CD8-positive, alpha-beta memory T cell (primary cell): ENCODE measurements at regions of chr3 and their contacts with region 1.

Region 1: DNA sequence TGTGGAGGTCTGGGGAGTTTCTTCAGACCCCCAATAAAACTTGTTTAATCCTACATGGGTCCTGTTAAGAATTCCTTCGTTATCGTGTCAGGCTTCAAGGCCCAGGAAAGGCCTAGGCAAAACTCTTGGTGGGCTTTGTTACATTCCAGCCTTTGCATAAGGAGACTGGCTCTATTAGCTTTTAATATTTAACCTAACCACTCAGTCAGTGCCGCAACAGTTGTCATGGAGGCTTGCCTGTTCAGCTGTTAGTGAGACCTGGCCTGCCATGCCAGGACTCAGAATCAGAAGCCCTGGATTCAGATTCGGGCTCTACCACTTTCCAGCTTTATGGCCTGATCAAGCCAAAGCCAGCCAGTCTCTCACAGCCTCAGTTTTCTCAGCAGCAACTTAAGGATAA is 19.6 kb downstream of the EIF1B start:
- DNase-seq: no peak
- H3K4me3 ChIP-seq: no peak overlapping the region
- H3K4me3 Mint-ChIP-seq: no peak overlapping the region
- H3K27ac ChIP-seq: no peak overlapping the region
- H3K27ac Mint-ChIP-seq: no peak overlapping the region
- H3K4me1 ChIP-seq: no peaks in the 10 kb centered on the region
- H3K4me1 Mint-ChIP-seq: peaks cover 3 to 5% (median 4%) of the 10 kb centered on the region in 3 donors
- H3K27me3 ChIP-seq: no peaks in the 10 kb centered on the region
- H3K27me3 Mint-ChIP-seq: no peaks in the 10 kb centered on the region

Region 2: DNA sequence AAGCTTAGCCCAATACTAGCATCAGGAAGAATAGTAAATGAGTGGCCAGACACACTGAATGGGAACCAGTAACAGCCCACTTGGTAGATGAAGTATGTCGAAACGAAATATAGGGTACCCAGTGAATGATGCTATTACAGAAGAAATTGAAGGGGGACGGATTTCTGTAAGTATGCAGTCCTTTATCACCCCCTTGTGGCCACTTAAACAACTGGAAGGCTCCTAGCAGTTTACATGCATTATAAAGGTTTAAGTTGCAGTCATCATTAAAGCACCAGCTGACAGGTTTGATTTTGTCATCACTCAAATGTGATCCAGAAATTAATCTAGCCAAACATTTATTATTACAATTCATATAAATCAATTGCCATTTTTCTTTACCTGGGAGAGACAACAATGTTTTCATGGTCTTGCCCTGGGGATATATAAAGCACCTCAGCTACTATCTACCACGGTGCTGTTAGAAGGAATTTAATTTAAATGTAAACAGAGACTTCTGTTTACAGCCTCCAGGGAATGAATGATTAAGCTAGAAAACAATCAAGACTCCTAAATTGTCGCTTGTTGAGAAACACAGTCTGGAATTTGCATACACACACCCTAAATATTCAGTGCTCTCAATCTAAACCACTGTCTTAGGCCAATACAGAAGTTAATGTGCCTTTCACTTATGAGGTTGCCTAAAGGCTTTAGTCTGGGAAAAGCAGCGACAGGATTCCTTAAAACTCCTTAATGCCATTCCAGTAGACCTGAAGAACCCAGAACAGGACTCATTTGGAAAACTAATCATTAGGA is 11.8 kb before region 1 on chr3:
- CTCF ChIA-PET with region 1: interaction called, 11 read pairs
- POLR2A ChIA-PET with region 1: no interaction called
- DNase-seq: peak; percentile 16 to 60 (median 50)
- H3K4me3 ChIP-seq: no peak overlapping the region
- H3K4me3 Mint-ChIP-seq: no peak overlapping the region
- H3K27ac ChIP-seq: no peak overlapping the region
- H3K27ac Mint-ChIP-seq: peak overlapping the region in 1 of 8 donors; percentile 24
- H3K4me1 ChIP-seq: no peaks in the 10 kb centered on the region
- H3K4me1 Mint-ChIP-seq: peaks cover 6 to 16% (median 7%) of the 10 kb centered on the region in 3 donors
- H3K27me3 ChIP-seq: no peaks in the 10 kb centered on the region
- H3K27me3 Mint-ChIP-seq: peaks cover 0 to 1% of the 10 kb centered on the region in 2 donors

Region 3: GRCh38 chr3:41881233-41881821 is 1552.3 kb after region 1 on chr3:
- CTCF ChIA-PET with region 1: interaction called, 27 read pairs
- POLR2A ChIA-PET with region 1: no interaction called
- DNase-seq: peak in 2 of 5 donors; percentile 28 to 29
- H3K4me3 ChIP-seq: no peak overlapping the region
- H3K4me3 Mint-ChIP-seq: no peak overlapping the region
- H3K27ac ChIP-seq: no peak overlapping the region
- H3K27ac Mint-ChIP-seq: no peak overlapping the region
- H3K4me1 ChIP-seq: no peaks in the 10 kb centered on the region
- H3K4me1 Mint-ChIP-seq: no peaks in the 10 kb centered on the region
- H3K27me3 ChIP-seq: no peaks in the 10 kb centered on the region
- H3K27me3 Mint-ChIP-seq: no peaks in the 10 kb centered on the region